GM12878 (cell line): ENCODE measurements at regions of chr1 and their contacts with region 1.

Region 1: DNA sequence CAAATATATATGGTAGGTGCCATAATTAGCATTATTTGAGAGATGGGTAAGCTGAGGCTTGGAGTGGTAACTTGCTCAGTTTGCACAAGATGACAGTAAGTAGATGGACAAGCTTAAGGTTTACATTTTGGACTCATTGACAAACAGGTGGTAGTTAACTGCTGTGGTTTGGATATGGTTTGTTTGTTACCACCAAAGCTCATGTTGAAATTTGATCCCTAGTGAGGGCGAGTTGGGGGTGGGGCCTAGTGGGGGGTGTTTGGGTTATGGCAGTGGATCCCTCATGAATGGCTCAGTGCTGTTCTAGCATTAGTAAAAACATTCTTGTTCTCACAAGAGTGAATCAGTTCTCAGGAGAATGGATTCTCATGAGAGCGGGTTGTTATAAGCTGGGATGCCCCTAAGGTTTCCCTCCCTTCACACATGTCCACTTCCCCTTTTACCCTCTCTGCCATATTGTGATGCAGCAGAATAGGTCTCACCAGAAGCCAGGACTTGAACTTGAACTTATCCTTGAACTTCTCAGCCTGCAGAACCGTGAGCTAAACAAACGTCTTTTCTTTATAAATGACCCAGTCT is 6.6 kb upstream of the PRRX1 start:
- DNase-seq: peak; percentile 42
- ATAC-seq: peak; percentile 78
- H3K4me3 ChIP-seq: no peak overlapping the region
- H3K27ac ChIP-seq: no peak overlapping the region
- H3K4me1 ChIP-seq: no peaks in the 10 kb centered on the region
- H3K27me3 ChIP-seq: peaks cover 2 to 16% of the 10 kb centered on the region in 2 experiments
- CTCF ChIP-seq: no peak
- EP300 ChIP-seq: 0 out of 4 replicates have a peak, but pooled peaks of 1 of the 2 experiments have one; percentile 34
- POLR2A ChIP-seq: no peak
- RAD21 ChIP-seq: no peak

Region 2: GRCh38 chr1:170074250-170075157 is 582.9 kb before region 1 on chr1 and contains the start of gene KIFAP3:
- CTCF ChIA-PET with region 1: interaction called, 6 read pairs
- POLR2A ChIA-PET with region 1: interaction called, 4 read pairs
- RAD21 ChIA-PET with region 1: interaction called, 7 read pairs
- SMC1A ChIA-PET with region 1: interaction called, 4 read pairs
- in situ Hi-C with region 1: no loop called
- intact Hi-C with region 1: loop called (anchors 5 kb)
- DNase-seq: peak; percentile 98
- ATAC-seq: peak; percentile 95
- H3K4me3 ChIP-seq: peak within 1 kb of the TSS; percentile 75
- H3K27ac ChIP-seq: peak within 1 kb of the TSS; percentile 78
- H3K4me1 ChIP-seq: no peaks in the 10 kb centered on the region
- H3K27me3 ChIP-seq: no peaks in the 10 kb centered on the region
- CTCF ChIP-seq: peak; percentile 52 to 72 (median 65)
- EP300 ChIP-seq: no peak
- POLR2A ChIP-seq: peak; percentile 86
- RAD21 ChIP-seq: peak; percentile 58
- polyA plus RNA-seq, gene KIFAP3: 15.8 to 16.9 TPM

Region 3: DNA sequence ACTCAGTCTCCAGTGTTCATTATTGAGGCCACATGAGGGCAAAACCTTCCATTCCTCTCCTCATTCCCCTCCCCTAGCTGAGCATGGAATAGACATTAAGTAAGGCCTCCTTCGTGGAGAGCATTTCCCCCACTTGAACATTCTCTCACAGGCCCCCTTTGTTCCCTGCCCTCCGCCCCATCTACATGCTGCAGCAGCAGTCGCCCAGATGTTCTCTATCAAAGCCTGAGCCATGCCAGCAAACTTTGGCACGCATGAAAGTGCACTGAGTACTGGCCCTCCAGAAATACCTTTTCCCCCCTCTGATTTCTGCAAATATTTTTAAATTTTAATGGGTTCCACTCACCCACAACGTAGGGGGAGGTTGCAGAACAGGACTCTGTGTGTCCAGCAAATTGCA is 146.3 kb before region 1 on chr1:
- CTCF ChIA-PET with region 1: no interaction called
- POLR2A ChIA-PET with region 1: no interaction called
- RAD21 ChIA-PET with region 1: no interaction called
- SMC1A ChIA-PET with region 1: no interaction called
- in situ Hi-C with region 1: no loop called
- intact Hi-C with region 1: no loop called
- DNase-seq: no peak
- ATAC-seq: no peak
- H3K4me3 ChIP-seq: no peak overlapping the region
- H3K27ac ChIP-seq: no peak overlapping the region
- H3K4me1 ChIP-seq: no peaks in the 10 kb centered on the region
- H3K27me3 ChIP-seq: no peaks in the 10 kb centered on the region
- CTCF ChIP-seq: no peak
- EP300 ChIP-seq: no peak
- POLR2A ChIP-seq: no peak
- RAD21 ChIP-seq: no peak

Region 4: GRCh38 chr1:170537798-170538503 is 119.4 kb before region 1 on chr1:
- CTCF ChIA-PET with region 1: interaction called, 10 read pairs
- POLR2A ChIA-PET with region 1: interaction called, 50 read pairs
- RAD21 ChIA-PET with region 1: interaction called, 41 read pairs
- SMC1A ChIA-PET with region 1: interaction called, 112 read pairs
- in situ Hi-C with region 1: no loop called
- intact Hi-C with region 1: no loop called
- DNase-seq: no peak
- ATAC-seq: no peak
- H3K4me3 ChIP-seq: no peak overlapping the region
- H3K27ac ChIP-seq: no peak overlapping the region
- H3K4me1 ChIP-seq: no peaks in the 10 kb centered on the region
- H3K27me3 ChIP-seq: no peaks in the 10 kb centered on the region
- CTCF ChIP-seq: no peak
- EP300 ChIP-seq: no peak
- POLR2A ChIP-seq: no peak
- RAD21 ChIP-seq: no peak

Region 5: DNA sequence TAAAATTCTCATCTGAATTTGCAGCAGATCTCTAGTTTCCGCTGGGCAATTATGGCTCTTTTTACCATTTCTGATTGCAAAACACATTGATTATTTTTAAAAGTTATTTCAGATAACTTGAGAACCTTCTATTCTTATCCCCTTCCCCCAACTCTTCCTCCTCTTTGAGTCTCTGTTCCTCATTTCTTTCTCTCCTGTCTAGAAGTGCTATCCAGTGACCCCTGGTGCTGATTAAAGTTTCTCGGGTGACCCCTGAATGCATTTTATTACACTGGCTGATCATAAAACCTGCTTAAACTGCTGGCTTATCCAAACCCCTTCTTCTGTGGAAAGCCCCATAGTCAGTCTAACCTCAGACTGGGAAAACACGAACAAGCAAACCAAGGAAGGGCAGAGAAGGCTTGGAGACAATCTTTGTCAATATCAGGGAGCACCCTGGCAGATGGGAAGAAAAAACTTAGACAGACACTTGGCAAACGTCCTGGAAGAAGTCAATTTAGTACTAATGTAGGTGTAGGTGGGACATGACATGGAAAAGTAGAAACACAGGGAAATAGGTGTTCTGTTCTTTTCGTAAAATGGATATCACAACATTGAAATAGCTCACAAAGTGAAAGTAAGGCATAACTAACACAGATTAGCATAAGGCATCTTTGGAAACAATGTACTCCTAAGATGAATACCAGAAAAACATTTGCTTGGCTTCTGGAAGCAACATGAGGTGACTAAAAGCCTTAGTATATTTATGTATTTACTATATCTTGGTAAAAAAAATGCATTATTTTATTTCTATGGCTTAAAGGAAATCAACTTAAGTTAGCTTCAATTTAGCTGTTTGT is 64.0 kb before region 1 on chr1:
- CTCF ChIA-PET with region 1: interaction called, 7 read pairs
- POLR2A ChIA-PET with region 1: interaction called, 12 read pairs
- RAD21 ChIA-PET with region 1: interaction called, 46 read pairs
- SMC1A ChIA-PET with region 1: interaction called, 35 read pairs
- in situ Hi-C with region 1: no loop called
- intact Hi-C with region 1: loop called (anchors 10 kb)
- DNase-seq: no peak
- ATAC-seq: peak; percentile 55; the same call in 2 of the 3 replicates
- H3K4me3 ChIP-seq: no peak overlapping the region
- H3K27ac ChIP-seq: no peak overlapping the region
- H3K4me1 ChIP-seq: no peaks in the 10 kb centered on the region
- H3K27me3 ChIP-seq: no peaks in the 10 kb centered on the region
- CTCF ChIP-seq: 0 out of 6 replicates have a peak, but pooled peaks of 1 of the 3 experiments have one; percentile 1
- EP300 ChIP-seq: no peak
- POLR2A ChIP-seq: no peak
- RAD21 ChIP-seq: no peak

Region 6: DNA sequence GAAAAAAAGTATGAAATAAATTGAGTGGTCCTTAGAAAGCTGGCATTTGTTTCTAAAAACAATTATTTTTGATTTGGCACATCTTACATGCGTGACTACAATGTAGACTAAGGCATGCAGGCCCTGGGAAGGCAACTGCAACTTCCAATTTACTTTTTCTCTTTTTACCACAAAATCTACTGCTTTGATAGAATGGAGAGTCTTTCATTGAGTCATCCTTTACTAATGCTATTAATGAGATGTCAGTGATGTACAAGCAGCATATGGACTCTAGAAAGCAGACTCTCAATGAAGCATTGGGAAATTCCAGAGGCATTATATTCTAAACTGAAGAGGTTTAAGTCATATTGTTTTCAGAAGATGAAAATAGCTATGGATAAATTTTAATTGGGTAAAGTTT is 23.1 kb before region 1 on chr1:
- CTCF ChIA-PET with region 1: interaction called, 18 read pairs
- POLR2A ChIA-PET with region 1: interaction called, 11 read pairs
- RAD21 ChIA-PET with region 1: interaction called, 19 read pairs
- SMC1A ChIA-PET with region 1: interaction called, 150 read pairs
- in situ Hi-C with region 1: no loop called
- intact Hi-C with region 1: no loop called
- DNase-seq: no peak
- ATAC-seq: peak; percentile 62
- H3K4me3 ChIP-seq: no peak overlapping the region
- H3K27ac ChIP-seq: no peak overlapping the region
- H3K4me1 ChIP-seq: no peaks in the 10 kb centered on the region
- H3K27me3 ChIP-seq: no peaks in the 10 kb centered on the region
- CTCF ChIP-seq: no peak
- EP300 ChIP-seq: no peak
- POLR2A ChIP-seq: no peak
- RAD21 ChIP-seq: no peak

Region 7: GRCh38 chr1:170692866-170693575 is 35.7 kb after region 1 on chr1:
- CTCF ChIA-PET with region 1: interaction called, 14 read pairs
- POLR2A ChIA-PET with region 1: no interaction called
- RAD21 ChIA-PET with region 1: interaction called, 8 read pairs
- SMC1A ChIA-PET with region 1: interaction called, 7 read pairs
- in situ Hi-C with region 1: no loop called
- intact Hi-C with region 1: no loop called
- DNase-seq: no peak
- ATAC-seq: no peak
- H3K4me3 ChIP-seq: no peak overlapping the region
- H3K27ac ChIP-seq: no peak overlapping the region
- H3K4me1 ChIP-seq: no peaks in the 10 kb centered on the region
- H3K27me3 ChIP-seq: no peaks in the 10 kb centered on the region
- CTCF ChIP-seq: no peak
- EP300 ChIP-seq: no peak
- POLR2A ChIP-seq: no peak
- RAD21 ChIP-seq: no peak